Activated B cell treated with CpG ODN at 0.5 μM for 24 hours (primary cell): ENCODE measurements at regions of chr10 and their contacts with region 1.

Region 1: DNA sequence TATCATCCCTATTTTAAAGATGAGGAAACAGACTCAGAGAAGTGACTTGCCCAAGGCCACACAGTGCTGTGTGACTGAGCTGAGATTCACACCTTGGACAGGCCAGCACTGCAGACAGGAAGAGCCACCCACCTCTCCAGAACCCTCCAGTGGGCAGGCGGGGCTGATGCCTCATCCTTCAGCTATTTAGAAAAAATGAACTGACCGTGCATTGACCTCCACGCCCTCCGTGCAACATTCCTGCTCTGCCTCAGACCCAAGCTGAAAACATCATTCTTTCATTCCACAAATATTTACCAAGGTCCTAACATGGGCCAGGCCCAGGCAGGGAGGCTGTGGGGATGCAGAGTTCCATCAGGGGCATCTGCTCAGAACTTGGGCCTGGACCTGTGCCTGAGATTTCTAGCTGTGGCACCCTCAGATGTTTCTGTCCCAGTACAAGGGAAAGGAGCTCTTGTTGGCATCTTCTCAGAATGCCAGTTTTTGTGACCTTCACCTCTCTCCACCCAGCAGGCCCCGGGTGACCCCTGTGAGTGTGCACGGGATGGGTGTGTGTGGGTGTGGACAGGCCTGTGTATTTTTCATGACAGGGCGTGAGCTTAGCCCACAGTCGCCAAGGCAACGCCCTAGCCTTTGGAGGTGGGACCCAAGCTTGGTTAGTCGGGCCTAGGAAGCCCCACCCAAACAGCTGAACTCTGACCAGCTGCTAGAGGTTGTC is 6.5 kb downstream of the VSIR start:
- DNase-seq: no peak
- ATAC-seq: peak; percentile 16
- H3K4me3 Mint-ChIP-seq: peak overlapping the region; percentile 55
- H3K27ac Mint-ChIP-seq: peak overlapping the region; percentile 91
- H3K4me1 Mint-ChIP-seq: peaks cover 79% of the 10 kb centered on the region
- H3K27me3 Mint-ChIP-seq: no peaks in the 10 kb centered on the region
- CTCF ChIP-seq: no peak

Region 2: DNA sequence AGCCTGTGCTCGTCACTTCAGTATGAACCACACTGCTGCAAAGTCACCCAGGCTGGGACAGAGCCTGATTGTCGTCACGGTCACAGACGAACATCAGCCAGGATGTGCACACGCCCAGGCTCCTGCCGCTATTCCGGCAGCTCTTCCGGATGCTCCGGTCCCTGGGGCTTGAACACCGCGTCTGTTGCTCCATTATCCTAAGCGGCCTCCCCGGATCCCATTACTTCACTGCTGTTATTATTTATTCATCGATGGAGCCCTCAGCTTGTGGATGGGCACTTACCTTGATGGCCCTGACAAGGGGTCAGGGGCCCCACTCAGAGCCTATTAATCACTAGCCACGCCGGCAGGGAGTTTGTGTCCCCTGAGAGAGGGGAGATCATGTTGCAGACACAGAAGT is 757.7 kb before region 1 on chr10:
- CTCF ChIA-PET with region 1: no interaction called
- POLR2A ChIA-PET with region 1: no interaction called
- intact Hi-C with region 1: no loop called
- DNase-seq: no peak
- ATAC-seq: no peak
- H3K4me3 Mint-ChIP-seq: no peak overlapping the region
- H3K27ac Mint-ChIP-seq: no peak overlapping the region
- H3K4me1 Mint-ChIP-seq: no peaks in the 10 kb centered on the region
- H3K27me3 Mint-ChIP-seq: peaks cover 8% of the 10 kb centered on the region
- CTCF ChIP-seq: no peak

Region 3: DNA sequence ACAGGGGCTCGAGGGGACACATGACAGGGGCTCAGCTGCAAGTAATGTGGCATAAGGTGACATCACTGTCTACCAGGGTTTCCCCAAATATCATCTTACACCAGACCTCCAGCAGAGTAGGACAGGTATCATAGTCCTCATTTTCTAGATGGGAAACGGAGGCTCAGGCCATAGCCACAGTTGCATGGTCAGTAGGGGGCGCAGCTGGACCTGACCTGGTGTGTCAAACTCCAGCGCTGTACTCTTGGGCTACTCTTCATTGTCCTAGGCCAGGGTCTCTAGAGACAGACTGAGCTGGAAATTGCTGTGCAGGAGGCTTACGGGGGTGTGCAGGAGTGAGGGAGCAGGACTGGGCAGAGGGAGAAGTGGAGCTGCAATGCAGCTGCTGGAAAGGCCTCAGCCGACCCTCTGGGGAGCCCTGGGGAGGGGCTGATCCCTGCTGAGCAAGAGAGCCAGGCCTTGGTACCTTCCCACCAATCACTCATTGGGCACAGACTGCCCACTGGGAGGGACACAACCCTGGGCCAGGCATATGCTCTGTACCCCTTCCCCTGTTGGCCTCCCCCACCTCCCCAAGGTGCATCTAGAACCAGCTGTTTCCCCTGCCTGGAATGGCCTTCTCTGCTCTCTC is 280.3 kb before region 1 on chr10:
- CTCF ChIA-PET with region 1: no interaction called
- POLR2A ChIA-PET with region 1: no interaction called
- intact Hi-C with region 1: no loop called
- DNase-seq: no peak
- ATAC-seq: no peak
- H3K4me3 Mint-ChIP-seq: no peak overlapping the region
- H3K27ac Mint-ChIP-seq: no peak overlapping the region
- H3K4me1 Mint-ChIP-seq: no peaks in the 10 kb centered on the region
- H3K27me3 Mint-ChIP-seq: peaks cover 5% of the 10 kb centered on the region
- CTCF ChIP-seq: no peak

Region 4: GRCh38 chr10:71756311-71757191 is 10.3 kb before region 1 on chr10:
- CTCF ChIA-PET with region 1: interaction called, 3 read pairs
- POLR2A ChIA-PET with region 1: interaction called, 21 read pairs
- intact Hi-C with region 1: no loop called
- DNase-seq: no peak
- ATAC-seq: peak; percentile 49
- H3K4me3 Mint-ChIP-seq: no peak overlapping the region
- H3K27ac Mint-ChIP-seq: peak overlapping the region; percentile 76
- H3K4me1 Mint-ChIP-seq: peaks cover 61% of the 10 kb centered on the region
- H3K27me3 Mint-ChIP-seq: no peaks in the 10 kb centered on the region
- CTCF ChIP-seq: no peak